ENCODE measurements at regions of chr11 and their contacts with region 1.

Region 1: GRCh38 chr11:96242971-96243647 is 99.9 kb downstream of the MAML2 start:
- H3K4me3 Mint-ChIP-seq: peak overlapping the region; percentile 76
- H3K27ac Mint-ChIP-seq: peak overlapping the region; percentile 83
- H3K4me1 Mint-ChIP-seq: peaks cover 39% of the 10 kb centered on the region
- H3K27me3 Mint-ChIP-seq: no peaks in the 10 kb centered on the region

Region 2: GRCh38 chr11:96054870-96055705 is 188.0 kb before region 1 on chr11:
- intact Hi-C with region 1: loop called (anchors 10 kb)
- H3K4me3 Mint-ChIP-seq: no peak overlapping the region
- H3K27ac Mint-ChIP-seq: no peak overlapping the region
- H3K4me1 Mint-ChIP-seq: peaks cover 9% of the 10 kb centered on the region
- H3K27me3 Mint-ChIP-seq: no peaks in the 10 kb centered on the region